HepG2 (cell line): ENCODE measurements at regions of chr13 and their contacts with region 1.

Region 1: DNA sequence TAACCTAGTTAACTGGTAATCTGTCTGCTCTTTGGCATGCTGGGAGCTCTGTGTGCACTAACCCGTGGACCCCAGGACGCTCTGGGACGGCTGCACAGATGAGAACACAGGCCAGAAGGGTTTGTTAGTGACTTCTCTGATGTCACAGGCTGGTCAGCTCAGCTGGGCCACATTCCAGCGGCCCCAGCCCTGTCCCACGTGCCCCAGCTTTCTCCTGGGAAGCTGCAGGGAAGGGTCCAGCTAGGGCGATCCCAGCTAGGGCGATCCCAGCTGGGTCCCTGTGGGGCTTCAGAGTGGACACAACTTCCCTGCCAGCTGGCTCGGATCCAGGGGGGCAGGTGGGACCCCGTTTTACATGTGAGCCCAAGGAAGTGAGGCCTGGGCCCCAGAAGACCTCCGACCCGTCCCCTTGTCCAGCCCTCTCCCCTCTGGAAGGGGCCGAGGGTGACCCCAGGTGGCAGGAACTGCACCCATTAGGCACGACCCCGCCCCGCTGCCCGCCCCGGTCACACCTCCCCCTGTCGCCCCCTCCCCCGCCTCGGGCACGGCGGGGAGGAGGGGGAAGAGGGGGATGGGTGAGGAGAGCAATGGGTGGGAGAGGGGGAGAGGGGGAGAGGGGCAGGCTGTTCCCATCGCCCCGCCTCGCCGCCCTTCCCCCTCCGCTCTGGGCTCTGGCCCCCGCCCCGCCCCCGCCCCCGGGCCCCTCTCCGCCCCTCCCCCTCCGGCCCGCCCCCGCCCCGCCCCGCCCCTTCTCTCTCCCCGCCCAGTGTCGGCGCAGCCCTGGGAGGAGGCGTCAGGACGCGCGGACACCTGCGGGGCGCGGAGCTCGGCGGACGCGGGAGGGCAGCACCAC is 75.2 kb upstream of the MCF2L start:
- DNase-seq: peak; percentile 76
- ATAC-seq: peak; percentile 73
- H3K4me3 ChIP-seq: peak overlapping the region; percentile 85 to 92 (median 86)
- H3K27ac ChIP-seq: peak overlapping the region; percentile 87
- H3K4me1 ChIP-seq: peaks cover 48% of the 10 kb centered on the region
- H3K27me3 ChIP-seq: peaks cover 4 to 34% of the 10 kb centered on the region in 2 experiments; a peak in 4 of 5 replicates
- CTCF ChIP-seq: peak; percentile 60
- EP300 ChIP-seq: 0 out of 4 replicates have a peak, but pooled peaks of 1 of the 2 experiments have one; percentile 8
- POLR2A ChIP-seq: peak in 1 of 2 experiments; percentile 40; a peak in 1 of 4 replicates
- RAD21 ChIP-seq: no peak

Region 2: GRCh38 chr13:112873851-112874750 is 19.7 kb before region 1 on chr13:
- CTCF ChIA-PET with region 1: no interaction called
- POLR2A ChIA-PET with region 1: no interaction called
- in situ Hi-C with region 1: no loop called
- intact Hi-C with region 1: no loop called
- DNase-seq: peak; percentile 67
- ATAC-seq: peak; percentile 93
- H3K4me3 ChIP-seq: no peak overlapping the region
- H3K27ac ChIP-seq: no peak overlapping the region
- H3K4me1 ChIP-seq: peaks cover 6% of the 10 kb centered on the region; the same call in 1 of the 2 replicates
- H3K27me3 ChIP-seq: no peaks in the 10 kb centered on the region
- CTCF ChIP-seq: peak; percentile 91
- EP300 ChIP-seq: no peak
- POLR2A ChIP-seq: no peak
- RAD21 ChIP-seq: peak; percentile 80

Region 3: DNA sequence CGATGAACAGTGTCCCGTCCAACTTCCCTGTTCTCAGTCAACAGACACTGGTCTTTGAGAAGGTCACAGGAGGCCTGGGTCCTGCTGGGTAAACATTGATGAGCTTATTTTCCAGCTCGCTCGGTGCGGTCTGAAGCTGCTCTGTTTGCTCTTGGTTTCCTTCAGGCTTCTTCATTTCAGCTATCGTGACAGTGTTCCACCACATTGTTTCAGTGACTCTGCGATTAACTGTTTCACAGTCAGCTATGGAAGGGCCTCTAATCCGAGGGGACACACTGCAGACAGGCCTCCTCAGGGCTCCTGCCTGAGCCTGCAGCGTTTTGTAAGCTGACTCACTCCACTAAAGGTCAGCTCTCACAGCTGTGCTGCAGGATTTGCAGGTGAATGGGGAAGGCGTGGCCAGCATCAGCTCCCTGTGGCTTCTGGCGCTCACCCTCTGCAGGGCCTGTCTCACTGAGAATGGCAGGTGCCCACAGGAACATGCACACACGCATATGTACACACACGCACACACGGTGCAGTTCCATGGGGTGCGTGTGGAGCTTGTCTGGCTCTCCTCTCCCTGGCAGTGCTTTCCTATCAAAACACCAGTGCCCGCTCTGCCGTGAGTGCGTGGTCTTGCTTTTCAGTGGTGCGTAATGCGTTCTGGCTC is 12.3 kb after region 1 on chr13:
- CTCF ChIA-PET with region 1: no interaction called
- POLR2A ChIA-PET with region 1: interaction called, 26 read pairs
- in situ Hi-C with region 1: no loop called
- intact Hi-C with region 1: no loop called
- DNase-seq: peak; percentile 66
- ATAC-seq: peak; percentile 90
- H3K4me3 ChIP-seq: peak overlapping the region in 2 of 3 experiments; percentile 5 to 50; a peak in 2 of 6 replicates
- H3K27ac ChIP-seq: peak overlapping the region; percentile 73
- H3K4me1 ChIP-seq: peaks cover 59% of the 10 kb centered on the region
- H3K27me3 ChIP-seq: no peaks in the 10 kb centered on the region
- CTCF ChIP-seq: no peak; the same call in 1 of the 2 replicates
- EP300 ChIP-seq: no peak
- POLR2A ChIP-seq: peak in 1 of 2 experiments; percentile 37; a peak in 1 of 4 replicates
- RAD21 ChIP-seq: no peak

Region 4: DNA sequence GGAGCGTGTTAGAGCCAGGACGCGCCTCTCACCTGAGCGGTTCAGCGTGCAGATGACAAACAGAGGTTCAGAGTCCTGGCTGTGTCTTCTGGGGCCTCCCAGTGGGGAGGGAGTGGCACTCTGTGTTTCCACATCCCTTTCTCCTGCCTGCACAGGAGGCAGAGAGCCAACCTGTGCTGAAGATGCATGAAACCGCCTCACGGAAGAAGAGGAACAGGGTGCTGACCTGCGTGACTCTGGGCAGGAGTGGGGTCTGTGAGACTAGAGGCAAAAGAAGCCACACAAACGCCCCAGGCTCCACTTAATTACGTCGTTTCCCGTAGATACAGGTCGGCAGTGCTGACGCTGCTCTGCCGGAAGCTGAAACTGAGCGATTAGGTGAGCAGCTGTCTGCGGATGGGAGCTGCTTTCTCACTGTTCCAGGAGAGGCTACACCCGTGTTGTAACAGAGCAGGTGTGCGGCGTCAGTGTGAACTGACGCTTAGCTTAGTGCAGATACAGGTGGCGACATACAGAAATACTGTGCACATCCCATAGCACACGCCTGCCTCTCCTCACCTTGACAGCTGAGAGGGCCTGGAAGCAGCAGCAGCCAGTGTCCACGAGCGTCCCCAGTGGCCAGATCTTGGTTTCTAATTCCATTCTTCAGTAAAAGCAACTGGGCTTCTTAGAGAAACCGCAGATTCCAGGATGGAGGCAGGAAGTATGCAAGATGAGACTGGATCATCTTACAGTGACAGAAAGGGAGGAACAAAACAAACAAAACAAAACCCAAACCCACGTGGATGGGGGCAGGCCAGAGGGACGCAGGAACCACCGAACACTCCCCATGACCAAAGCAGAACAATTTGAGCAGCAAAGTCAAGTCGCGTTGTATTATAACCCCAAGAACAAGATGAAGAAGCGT is 37.5 kb after region 1 on chr13:
- CTCF ChIA-PET with region 1: no interaction called
- POLR2A ChIA-PET with region 1: interaction called, 11 read pairs
- in situ Hi-C with region 1: no loop called
- intact Hi-C with region 1: loop called (anchors 1 kb)
- DNase-seq: peak; percentile 59
- ATAC-seq: peak; percentile 85
- H3K4me3 ChIP-seq: peak overlapping the region; percentile 49 to 73 (median 53); a peak in 5 of 6 replicates
- H3K27ac ChIP-seq: peak overlapping the region; percentile 59
- H3K4me1 ChIP-seq: peaks cover 59% of the 10 kb centered on the region
- H3K27me3 ChIP-seq: no peaks in the 10 kb centered on the region
- CTCF ChIP-seq: peak; percentile 72
- EP300 ChIP-seq: no peak
- POLR2A ChIP-seq: no peak
- RAD21 ChIP-seq: peak; percentile 53; the same call in 1 of the 2 replicates